Activated T-helper 2 cell treated with anti-CD3 and anti-CD28 coated beads, Interferon-gamma antibody, Interleukin-2, Interleukin-4, amounts not matched to agents 10 μg/mL and 5 μg/mL and 100 μg/mL, durations not matched to agents 14 hours and 24 hours and 36 hours (primary cell): ENCODE measurements at regions of chr11 and their contacts with region 1.

Region 1: DNA sequence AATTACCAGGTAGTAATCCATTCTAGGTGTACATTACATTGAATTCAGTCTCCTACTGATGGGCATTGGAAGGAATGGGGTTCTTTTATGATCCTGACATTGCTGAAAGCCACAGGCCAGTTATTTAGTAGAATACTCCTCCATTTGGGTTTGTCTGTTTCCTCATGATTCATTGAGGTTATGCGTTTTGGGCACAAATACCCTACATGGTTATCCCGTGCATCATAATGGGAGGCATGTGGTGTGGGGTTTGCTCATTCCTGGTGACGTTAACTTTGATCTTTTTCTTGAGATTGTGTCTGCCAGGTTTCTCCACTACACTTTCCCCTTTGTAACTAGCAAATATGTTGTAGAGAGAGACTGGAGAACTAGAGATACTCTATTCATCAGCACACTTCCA is 5.5 kb downstream of the FOLR3 start:
- DNase-seq: peak; percentile 23
- H3K4me3 Mint-ChIP-seq: peak overlapping the region; percentile 35
- H3K27ac Mint-ChIP-seq: peak overlapping the region; percentile 92
- H3K4me1 Mint-ChIP-seq: peaks cover 36% of the 10 kb centered on the region
- H3K27me3 Mint-ChIP-seq: no peaks in the 10 kb centered on the region

Region 2: GRCh38 chr11:71895961-71896360 is 245.1 kb before region 1 on chr11:
- intact Hi-C with region 1: no loop called
- DNase-seq: no peak
- H3K4me3 Mint-ChIP-seq: no peak overlapping the region
- H3K27ac Mint-ChIP-seq: no peak overlapping the region
- H3K4me1 Mint-ChIP-seq: no peaks in the 10 kb centered on the region
- H3K27me3 Mint-ChIP-seq: no peaks in the 10 kb centered on the region

Region 3: GRCh38 chr11:72030472-72031045 is 110.5 kb before region 1 on chr11:
- intact Hi-C with region 1: loop called (anchors 1 kb)
- DNase-seq: no peak
- H3K4me3 Mint-ChIP-seq: no peak overlapping the region
- H3K27ac Mint-ChIP-seq: no peak overlapping the region
- H3K4me1 Mint-ChIP-seq: peaks cover 10% of the 10 kb centered on the region
- H3K27me3 Mint-ChIP-seq: no peaks in the 10 kb centered on the region

Region 4: GRCh38 chr11:72040726-72041441 is 100.2 kb before region 1 on chr11:
- intact Hi-C with region 1: loop called (anchors 5 kb)
- DNase-seq: peak; percentile 50
- H3K4me3 Mint-ChIP-seq: no peak overlapping the region
- H3K27ac Mint-ChIP-seq: no peak overlapping the region
- H3K4me1 Mint-ChIP-seq: peaks cover 31% of the 10 kb centered on the region
- H3K27me3 Mint-ChIP-seq: no peaks in the 10 kb centered on the region

Region 5: DNA sequence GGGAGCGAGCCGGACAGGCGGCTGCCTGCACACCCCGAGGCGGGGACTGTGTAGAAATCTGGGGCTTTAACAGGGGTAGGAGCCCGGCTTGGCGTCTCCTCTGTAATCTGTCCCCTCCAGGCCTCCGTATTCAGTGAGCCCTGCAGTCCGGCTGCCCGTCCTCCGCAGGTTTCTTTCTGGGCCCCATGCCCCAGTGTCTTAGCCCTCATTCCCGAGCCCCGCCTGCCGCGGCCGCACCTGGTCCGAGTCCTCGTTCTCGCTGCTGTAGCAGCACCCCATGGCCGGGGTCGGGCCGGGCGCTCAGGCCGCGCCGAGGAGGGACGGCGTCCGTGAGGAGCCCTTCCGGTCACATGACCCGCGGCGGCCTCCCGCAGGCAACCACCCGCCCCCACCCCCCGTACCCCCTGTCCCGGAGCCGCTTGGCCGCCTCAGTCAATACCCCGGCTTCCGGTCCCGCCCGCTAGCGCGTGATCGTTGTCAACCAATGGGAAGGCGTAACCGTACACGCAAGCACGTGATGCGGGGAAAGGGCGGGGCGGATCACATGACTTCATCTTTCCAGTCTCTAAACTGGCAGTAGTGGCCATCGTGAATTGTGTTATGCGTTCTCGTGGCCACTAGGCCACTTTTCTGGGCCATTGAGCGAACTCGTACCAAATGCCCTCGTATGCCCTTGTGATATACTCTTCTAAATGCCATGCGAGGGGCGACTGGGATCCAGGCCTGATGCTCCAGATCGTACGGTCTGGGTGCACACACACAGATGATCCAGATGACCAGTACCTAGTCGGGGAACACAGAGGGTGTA is 37.9 kb before region 1 on chr11 and contains the start of gene LAMTOR1:
- intact Hi-C with region 1: loop called (anchors 2 kb)
- DNase-seq: peak; percentile 97
- H3K4me3 Mint-ChIP-seq: peak within 1 kb of the TSS; percentile 95
- H3K27ac Mint-ChIP-seq: peak within 1 kb of the TSS; percentile 96
- H3K4me1 Mint-ChIP-seq: peaks cover 32% of the 10 kb centered on the region
- H3K27me3 Mint-ChIP-seq: no peaks in the 10 kb centered on the region
- total RNA-seq, gene LAMTOR1: 95.1 and 100 TPM in 2 replicates

Region 6: DNA sequence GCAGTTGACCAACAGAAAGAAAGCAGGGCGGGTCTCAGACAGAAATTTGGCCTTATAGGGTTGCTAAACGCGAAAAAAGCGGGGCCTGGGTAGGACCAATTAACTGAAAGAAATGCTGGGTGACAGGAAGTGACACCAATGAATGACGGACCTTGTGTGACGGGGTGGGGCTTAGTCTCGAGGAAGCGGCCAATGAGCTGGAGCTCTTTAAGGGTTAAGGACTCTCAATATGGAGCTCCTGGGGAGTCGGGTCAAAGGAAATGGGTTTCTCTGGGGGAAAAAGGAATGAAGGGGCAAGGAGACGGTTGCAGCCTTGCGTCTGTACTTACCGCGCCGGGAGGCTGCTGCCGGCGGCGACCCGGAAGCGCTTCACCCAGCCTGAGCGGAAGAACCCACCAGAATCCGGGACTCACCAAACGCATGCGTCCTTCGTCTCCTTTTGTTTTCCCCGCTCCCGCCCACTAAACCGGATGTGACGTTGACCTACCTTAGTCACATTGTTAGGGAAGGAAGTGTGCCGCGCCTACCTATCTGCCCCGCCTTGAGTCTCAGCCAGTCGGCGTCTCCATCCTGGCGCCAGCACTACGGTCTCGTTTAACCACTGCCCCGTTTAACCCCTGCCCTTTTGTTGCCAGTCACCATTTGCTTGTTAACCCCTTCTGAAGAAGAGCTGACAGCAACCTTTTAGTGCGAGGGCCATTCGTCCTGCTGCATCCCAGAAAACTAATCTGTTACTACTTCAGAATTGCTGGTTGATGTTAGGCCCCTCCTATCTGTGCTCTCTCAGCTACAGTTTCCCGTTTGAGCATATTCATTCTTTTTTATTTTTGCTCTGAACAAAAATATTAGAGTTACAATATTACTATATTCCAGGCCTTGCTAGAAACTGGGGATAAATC is 28.5 kb before region 1 on chr11 and contains the start of gene ANAPC15:
- intact Hi-C with region 1: loop called (anchors 1 kb)
- DNase-seq: peak; percentile 98
- H3K4me3 Mint-ChIP-seq: peak within 1 kb of the TSS; percentile 89
- H3K27ac Mint-ChIP-seq: peak within 1 kb of the TSS; percentile 98
- H3K4me1 Mint-ChIP-seq: peaks cover 16% of the 10 kb centered on the region
- H3K27me3 Mint-ChIP-seq: no peaks in the 10 kb centered on the region
- total RNA-seq, gene ANAPC15: 61.6 and 67.9 TPM in 2 replicates

Region 7: GRCh38 chr11:72179804-72180396 is 38.8 kb after region 1 on chr11:
- intact Hi-C with region 1: loop called (anchors 2 kb)
- DNase-seq: no peak
- H3K4me3 Mint-ChIP-seq: no peak overlapping the region
- H3K27ac Mint-ChIP-seq: peak overlapping the region; percentile 74
- H3K4me1 Mint-ChIP-seq: peaks cover 17% of the 10 kb centered on the region
- H3K27me3 Mint-ChIP-seq: peaks cover 9% of the 10 kb centered on the region